CD14-positive monocyte (primary cell): ENCODE measurements at regions of chr17 and their contacts with region 1.

Region 1: GRCh38 chr17:79796763-79797491 is at the start of gene CBX8:
- DNase-seq: peak; percentile 100
- H3K4me3 ChIP-seq: peak within 1 kb of the TSS; percentile 53 to 99 (median 58)
- H3K4me3 Mint-ChIP-seq: peak within 1 kb of the TSS; percentile 84 to 91
- H3K27ac ChIP-seq: peak within 1 kb of the TSS; percentile 67 to 80
- H3K27ac Mint-ChIP-seq: peak within 1 kb of the TSS; percentile 76 to 95 (median 90)
- H3K4me1 ChIP-seq: peaks cover 56 to 62% of the 10 kb centered on the region in 2 donors
- H3K4me1 Mint-ChIP-seq: peaks cover 47% of the 10 kb centered on the region
- H3K27me3 ChIP-seq: peaks cover 58 to 70% of the 10 kb centered on the region in 2 donors
- H3K27me3 Mint-ChIP-seq: peaks cover 55 to 73% (median 60%) of the 10 kb centered on the region in 3 donors
- CTCF ChIP-seq: no peak
- polyA plus RNA-seq, gene CBX8: 0.51 to 2.5 (median 2.5) TPM

Region 2: GRCh38 chr17:79810130-79811010 is 13.4 kb after region 1 on chr17:
- intact Hi-C with region 1: loop called (anchors 2 kb)
- DNase-seq: peak; percentile 60 to 79 (median 77)
- H3K4me3 ChIP-seq: no peak overlapping the region
- H3K4me3 Mint-ChIP-seq: peak overlapping the region in 1 of 2 donors; percentile 68
- H3K27ac ChIP-seq: no peak overlapping the region
- H3K27ac Mint-ChIP-seq: no peak overlapping the region
- H3K4me1 ChIP-seq: peaks cover 45 to 56% of the 10 kb centered on the region in 2 donors
- H3K4me1 Mint-ChIP-seq: peaks cover 41% of the 10 kb centered on the region
- H3K27me3 ChIP-seq: peaks cover 78 to 89% of the 10 kb centered on the region in 2 donors
- H3K27me3 Mint-ChIP-seq: peaks cover 75 to 92% (median 84%) of the 10 kb centered on the region in 3 donors
- CTCF ChIP-seq: no peak

Region 3: GRCh38 chr17:79839363-79840268 is 42.7 kb after region 1 on chr17 and contains the start of gene CBX4:
- intact Hi-C with region 1: loop called (anchors 2 kb)
- DNase-seq: peak; percentile 84 to 88 (median 85)
- H3K4me3 ChIP-seq: peak within 1 kb of the TSS; percentile 91 to 95 (median 94)
- H3K4me3 Mint-ChIP-seq: peak within 1 kb of the TSS; percentile 94 to 95
- H3K27ac ChIP-seq: peak within 1 kb of the TSS; percentile 76 to 82
- H3K27ac Mint-ChIP-seq: peak within 1 kb of the TSS; percentile 91 to 98 (median 95)
- H3K4me1 ChIP-seq: peaks cover 71 to 89% of the 10 kb centered on the region in 2 donors
- H3K4me1 Mint-ChIP-seq: peaks cover 52% of the 10 kb centered on the region
- H3K27me3 ChIP-seq: peaks cover 27 to 44% of the 10 kb centered on the region in 2 donors
- H3K27me3 Mint-ChIP-seq: peaks cover 41 to 49% (median 42%) of the 10 kb centered on the region in 3 donors
- CTCF ChIP-seq: peak; percentile 78
- polyA plus RNA-seq, gene CBX4: 1.4 to 82.8 (median 3.6) TPM